CD14-positive monocyte (primary cell): ENCODE measurements at regions of chr1 and their contacts with region 1.

Region 1: DNA sequence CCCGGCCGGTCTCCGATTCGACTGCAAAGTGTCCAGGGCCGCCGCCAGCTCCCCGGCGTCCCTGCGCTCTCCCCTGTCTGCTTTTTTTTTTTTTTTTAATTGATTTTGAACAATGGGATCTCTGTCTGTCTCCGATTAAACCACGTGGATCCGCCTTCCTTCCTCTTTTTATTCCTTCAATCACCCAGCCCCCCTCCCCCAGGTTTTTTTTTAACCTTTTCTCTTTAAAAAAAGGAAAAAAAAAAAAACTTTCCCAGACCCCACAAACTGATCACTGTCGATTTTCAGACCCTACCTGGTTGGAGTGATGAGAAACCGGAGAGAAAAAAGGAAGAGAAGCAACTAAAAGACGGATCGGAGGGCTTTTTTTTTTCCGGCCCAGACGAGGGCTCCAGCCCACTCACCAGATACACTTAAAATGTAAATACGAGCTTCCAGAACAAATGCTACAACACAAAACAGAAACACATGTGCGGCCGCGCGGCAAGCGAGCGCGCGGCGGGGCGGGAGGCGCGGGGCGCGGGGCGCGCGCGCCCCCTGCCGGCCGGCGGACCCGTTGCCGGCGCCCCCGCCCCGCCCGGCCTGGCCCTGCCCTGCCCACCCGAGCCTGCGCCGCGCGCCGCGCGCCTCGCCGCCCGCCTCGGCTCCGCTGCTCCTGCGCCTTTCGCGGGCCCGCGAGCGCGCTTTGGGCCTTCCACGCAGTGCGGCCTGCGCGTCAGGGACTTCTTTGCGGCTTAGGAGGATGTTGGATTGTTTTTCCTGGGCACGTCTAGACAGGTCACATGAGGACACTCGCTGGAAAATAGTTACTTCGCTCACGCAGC is at the start of gene RCC2:
- DNase-seq: peak; percentile 56 to 66 (median 60)
- H3K4me3 ChIP-seq: peak within 1 kb of the TSS; percentile 71 to 92 (median 86)
- H3K4me3 Mint-ChIP-seq: peak within 1 kb of the TSS; percentile 88 to 95
- H3K27ac ChIP-seq: peak within 1 kb of the TSS; percentile 80
- H3K27ac Mint-ChIP-seq: peak within 1 kb of the TSS; percentile 89 to 98 (median 95)
- H3K4me1 ChIP-seq: peaks cover 47 to 59% of the 10 kb centered on the region in 2 donors
- H3K4me1 Mint-ChIP-seq: peaks cover 49% of the 10 kb centered on the region
- H3K27me3 ChIP-seq: peaks cover 0 to 9% of the 10 kb centered on the region in 2 donors
- H3K27me3 Mint-ChIP-seq: peaks cover 6 to 22% (median 6%) of the 10 kb centered on the region in 3 donors
- CTCF ChIP-seq: no peak
- polyA plus RNA-seq, gene RCC2: 22.3 to 66.3 (median 40.9) TPM

Region 2: DNA sequence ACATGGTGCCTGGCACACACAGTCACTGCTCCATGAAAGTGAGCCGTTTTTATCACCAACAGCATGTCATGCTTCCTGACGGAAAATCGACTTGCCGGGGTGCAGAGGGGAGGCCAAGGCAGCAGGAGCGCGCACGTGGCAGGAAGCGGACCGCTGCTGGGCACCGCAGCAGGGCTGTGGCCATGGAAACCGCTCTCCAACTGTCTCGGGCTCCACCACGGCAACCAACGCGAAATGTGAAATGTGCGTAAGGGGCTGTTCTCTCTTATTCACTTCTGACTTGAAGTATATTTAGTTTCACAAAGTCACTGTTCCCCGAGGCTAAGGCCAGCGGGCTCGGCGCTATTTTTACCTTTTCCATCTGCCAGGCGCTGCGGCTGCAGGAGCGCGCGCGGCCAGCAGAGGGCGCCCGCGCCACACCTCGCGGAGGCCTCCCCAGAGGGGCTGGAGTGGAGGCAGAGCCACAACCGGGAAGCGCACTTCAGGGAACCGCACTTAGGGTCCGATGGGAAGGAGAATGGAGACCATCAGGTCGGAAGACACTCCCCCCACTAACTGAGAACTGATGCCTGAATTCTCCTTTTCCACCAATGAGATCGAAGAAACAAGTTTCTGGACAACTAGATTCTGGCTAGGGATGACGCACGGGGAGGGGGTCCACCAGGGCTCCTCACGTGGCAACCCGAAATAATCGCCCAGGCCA is 19.7 kb before region 1 on chr1:
- intact Hi-C with region 1: loop called in 1 of 2 experiments (anchors 1 kb)
- DNase-seq: peak; percentile 37 to 59 (median 56)
- H3K4me3 ChIP-seq: no peak overlapping the region
- H3K4me3 Mint-ChIP-seq: no peak overlapping the region
- H3K27ac ChIP-seq: no peak overlapping the region
- H3K27ac Mint-ChIP-seq: peak overlapping the region in 1 of 7 donors; percentile 70
- H3K4me1 ChIP-seq: no peaks in the 10 kb centered on the region
- H3K4me1 Mint-ChIP-seq: peaks cover 5% of the 10 kb centered on the region
- H3K27me3 ChIP-seq: no peaks in the 10 kb centered on the region
- H3K27me3 Mint-ChIP-seq: peaks cover 0 to 1% (median 0%) of the 10 kb centered on the region in 3 donors
- CTCF ChIP-seq: peak; percentile 100

Region 3: GRCh38 chr1:17630048-17630830 is 190.8 kb after region 1 on chr1:
- intact Hi-C with region 1: loop called (anchors 10 kb)
- DNase-seq: peak; percentile 96 to 100 (median 99)
- H3K4me3 ChIP-seq: peak overlapping the region in 2 of 3 experiments; percentile 7 to 64
- H3K4me3 Mint-ChIP-seq: peak overlapping the region; percentile 51 to 83
- H3K27ac ChIP-seq: peak overlapping the region; percentile 98 to 99
- H3K27ac Mint-ChIP-seq: peak overlapping the region; percentile 96 to 100 (median 99)
- H3K4me1 ChIP-seq: peaks cover 80 to 84% of the 10 kb centered on the region in 2 donors
- H3K4me1 Mint-ChIP-seq: peaks cover 84% of the 10 kb centered on the region
- H3K27me3 ChIP-seq: no peaks in the 10 kb centered on the region
- H3K27me3 Mint-ChIP-seq: no peaks in the 10 kb centered on the region
- CTCF ChIP-seq: no peak